ENCODE measurements at regions of chr17 and their contacts with region 1.

Region 1: DNA sequence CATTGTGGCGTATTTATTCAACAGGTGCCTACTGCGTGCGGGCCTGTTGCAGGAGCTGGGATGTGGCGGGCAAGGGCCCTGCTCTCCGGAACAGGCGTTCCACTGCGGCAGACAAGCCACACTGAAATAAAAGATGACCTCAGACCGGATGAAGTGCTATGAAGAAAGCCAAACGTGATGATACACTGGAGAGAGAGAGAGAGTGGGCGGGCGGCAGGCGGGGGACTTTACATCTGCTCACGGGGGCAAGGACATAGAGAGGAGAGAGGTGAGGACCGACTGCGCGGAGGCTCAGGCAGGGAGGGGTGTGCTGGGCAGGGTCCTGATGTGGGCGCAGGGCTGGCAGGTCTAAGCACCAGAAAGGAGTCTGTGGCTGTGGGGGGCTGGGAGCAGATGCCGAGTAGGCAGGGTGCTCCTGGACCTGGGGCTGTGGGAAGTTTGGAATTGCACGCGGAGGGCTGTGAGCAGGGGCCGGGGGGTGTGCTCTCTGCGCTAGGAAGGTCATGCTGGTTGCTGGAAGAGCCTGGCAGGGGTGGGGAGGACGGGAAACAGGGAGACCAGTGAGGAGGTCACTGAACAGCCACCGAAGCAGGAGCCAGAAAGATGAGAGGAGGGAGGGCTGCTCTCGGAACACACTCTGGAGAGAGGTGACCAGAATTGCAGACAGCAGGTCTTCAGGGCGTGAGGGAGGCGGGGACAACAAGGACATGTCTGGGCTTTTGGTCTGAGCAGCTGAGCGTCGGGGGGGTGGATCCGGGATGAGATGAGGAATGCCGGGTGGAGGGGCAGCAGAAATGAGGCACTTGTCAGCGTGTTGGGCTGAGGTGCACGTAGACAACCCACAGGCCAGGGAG is 9.9 kb downstream of the MXRA7 start:
- DNase-seq: peak; percentile 86
- ATAC-seq: peak; percentile 74
- H3K4me3 ChIP-seq: peak overlapping the region; percentile 56 to 75 (median 62)
- H3K27ac ChIP-seq: peak overlapping the region; percentile 71
- H3K4me1 ChIP-seq: peaks cover 74% of the 10 kb centered on the region
- H3K27me3 ChIP-seq: no peaks in the 10 kb centered on the region
- CTCF ChIP-seq: peak; percentile 27; the same call in 1 of the 2 replicates
- EP300 ChIP-seq: no peak
- POLR2A ChIP-seq: 0 out of 4 replicates have a peak, but pooled peaks of 1 of the 2 experiments have one; percentile 34
- RAD21 ChIP-seq: no peak

Region 2: GRCh38 chr17:76537578-76538280 is 163.1 kb before region 1 on chr17 and contains the start of gene CYGB:
- CTCF ChIA-PET with region 1: no interaction called
- POLR2A ChIA-PET with region 1: no interaction called
- in situ Hi-C with region 1: no loop called
- intact Hi-C with region 1: no loop called
- DNase-seq: no peak
- ATAC-seq: no peak
- H3K4me3 ChIP-seq: no peak within 1 kb of the TSS
- H3K27ac ChIP-seq: no peak within 1 kb of the TSS
- H3K4me1 ChIP-seq: peaks cover 39% of the 10 kb centered on the region
- H3K27me3 ChIP-seq: no peaks in the 10 kb centered on the region
- CTCF ChIP-seq: no peak
- EP300 ChIP-seq: no peak
- POLR2A ChIP-seq: no peak
- RAD21 ChIP-seq: no peak
- total RNA-seq, gene CYGB: 27.1 and 28.9 TPM in 2 replicates

Region 3: DNA sequence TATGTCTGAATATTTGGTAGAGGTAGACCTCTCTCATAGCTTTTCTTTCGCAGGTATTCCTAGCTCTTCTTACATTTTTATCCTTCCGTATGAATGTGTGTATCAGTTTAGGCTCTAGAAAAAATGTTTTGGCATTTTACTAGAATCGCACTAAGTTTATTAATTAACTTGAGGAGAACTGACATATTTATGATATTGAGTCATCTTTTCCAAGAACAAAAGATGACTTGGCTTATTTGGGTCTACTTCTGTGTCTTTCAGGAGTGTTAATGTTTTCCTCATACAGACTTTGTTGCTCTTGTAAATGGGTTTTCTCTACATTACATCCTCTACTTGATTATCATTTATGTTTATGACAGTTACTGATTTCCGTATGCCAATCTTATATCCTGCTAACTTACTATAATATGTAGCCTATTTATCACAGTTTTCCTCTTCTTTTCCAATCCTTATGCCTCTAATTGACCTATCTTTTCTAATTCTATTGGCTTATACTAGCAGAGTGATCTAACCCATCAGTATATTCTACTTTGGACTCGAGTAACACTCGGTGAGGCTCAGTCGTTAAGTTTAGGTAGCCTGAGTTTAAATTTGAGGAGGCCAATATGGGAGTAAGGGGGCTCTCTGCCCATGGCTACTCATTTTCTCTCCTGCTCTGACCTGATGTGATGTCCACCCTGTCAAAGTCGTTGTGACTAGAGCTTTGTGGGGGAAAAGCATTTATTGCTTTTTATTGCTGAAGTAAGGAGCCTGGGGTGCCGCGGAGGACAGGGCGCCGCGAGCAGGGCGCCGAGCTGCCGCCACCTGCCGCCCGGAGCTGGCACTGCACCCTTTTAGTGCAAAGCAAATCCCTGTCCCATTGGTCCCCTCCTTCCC is 77.3 kb before region 1 on chr17:
- CTCF ChIA-PET with region 1: no interaction called
- POLR2A ChIA-PET with region 1: no interaction called
- in situ Hi-C with region 1: no loop called
- intact Hi-C with region 1: no loop called
- DNase-seq: peak; percentile 41
- ATAC-seq: peak; percentile 84
- H3K4me3 ChIP-seq: peak overlapping the region in 2 of 3 experiments; percentile 44; a peak in 4 of 6 replicates
- H3K27ac ChIP-seq: no peak overlapping the region
- H3K4me1 ChIP-seq: peaks cover 13% of the 10 kb centered on the region
- H3K27me3 ChIP-seq: peaks cover 0 to 2% of the 10 kb centered on the region in 2 experiments; a peak in 1 of 5 replicates
- CTCF ChIP-seq: peak; percentile 93
- EP300 ChIP-seq: no peak
- POLR2A ChIP-seq: no peak
- RAD21 ChIP-seq: peak; percentile 95

Region 4: DNA sequence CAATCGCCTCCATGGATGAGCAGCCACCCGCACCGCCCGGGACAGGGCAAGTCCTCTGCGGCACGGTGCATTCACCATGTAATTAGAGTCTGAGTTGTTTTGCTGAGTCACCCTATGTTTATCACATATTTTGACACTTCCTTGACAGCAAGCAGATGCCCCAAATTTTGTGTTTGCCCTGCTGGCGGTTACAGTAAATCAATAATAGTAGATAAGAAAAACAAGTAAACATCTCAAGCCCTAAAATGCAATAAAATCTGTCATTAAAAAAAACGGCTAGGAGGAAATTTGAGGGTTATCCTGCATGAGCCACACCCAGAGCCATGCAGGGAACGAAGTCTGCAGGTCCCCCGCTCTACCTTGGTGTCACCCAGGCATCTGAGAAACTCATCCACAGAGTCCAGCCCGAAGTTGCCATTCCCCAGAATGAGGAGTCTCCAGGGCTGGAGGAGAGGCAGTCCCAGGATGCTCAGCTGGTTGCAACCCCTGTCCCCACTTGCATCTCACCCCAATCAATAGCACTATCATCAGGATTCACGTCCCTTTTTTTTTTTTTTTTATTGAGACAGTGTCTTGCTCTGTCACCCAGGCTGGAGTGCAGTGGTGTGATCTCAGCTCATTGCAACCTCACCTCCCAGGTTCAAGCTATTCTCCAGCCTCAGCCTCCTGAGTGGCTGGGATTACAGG is 40.8 kb before region 1 on chr17:
- CTCF ChIA-PET with region 1: no interaction called
- POLR2A ChIA-PET with region 1: no interaction called
- in situ Hi-C with region 1: no loop called
- intact Hi-C with region 1: no loop called
- DNase-seq: no peak
- ATAC-seq: peak; percentile 76
- H3K4me3 ChIP-seq: peak overlapping the region in 2 of 3 experiments; percentile 5 to 16; a peak in 2 of 6 replicates
- H3K27ac ChIP-seq: no peak overlapping the region
- H3K4me1 ChIP-seq: peaks cover 61% of the 10 kb centered on the region
- H3K27me3 ChIP-seq: no peaks in the 10 kb centered on the region
- CTCF ChIP-seq: no peak
- EP300 ChIP-seq: no peak
- POLR2A ChIP-seq: no peak
- RAD21 ChIP-seq: no peak

Region 5: GRCh38 chr17:76687308-76688164 is 13.3 kb before region 1 on chr17:
- CTCF ChIA-PET with region 1: no interaction called
- POLR2A ChIA-PET with region 1: interaction called, 10 read pairs
- in situ Hi-C with region 1: no loop called
- intact Hi-C with region 1: no loop called
- DNase-seq: no peak
- ATAC-seq: no peak
- H3K4me3 ChIP-seq: no peak overlapping the region
- H3K27ac ChIP-seq: no peak overlapping the region
- H3K4me1 ChIP-seq: peaks cover 62% of the 10 kb centered on the region
- H3K27me3 ChIP-seq: no peaks in the 10 kb centered on the region
- CTCF ChIP-seq: no peak
- EP300 ChIP-seq: no peak
- POLR2A ChIP-seq: no peak
- RAD21 ChIP-seq: no peak

Region 6: DNA sequence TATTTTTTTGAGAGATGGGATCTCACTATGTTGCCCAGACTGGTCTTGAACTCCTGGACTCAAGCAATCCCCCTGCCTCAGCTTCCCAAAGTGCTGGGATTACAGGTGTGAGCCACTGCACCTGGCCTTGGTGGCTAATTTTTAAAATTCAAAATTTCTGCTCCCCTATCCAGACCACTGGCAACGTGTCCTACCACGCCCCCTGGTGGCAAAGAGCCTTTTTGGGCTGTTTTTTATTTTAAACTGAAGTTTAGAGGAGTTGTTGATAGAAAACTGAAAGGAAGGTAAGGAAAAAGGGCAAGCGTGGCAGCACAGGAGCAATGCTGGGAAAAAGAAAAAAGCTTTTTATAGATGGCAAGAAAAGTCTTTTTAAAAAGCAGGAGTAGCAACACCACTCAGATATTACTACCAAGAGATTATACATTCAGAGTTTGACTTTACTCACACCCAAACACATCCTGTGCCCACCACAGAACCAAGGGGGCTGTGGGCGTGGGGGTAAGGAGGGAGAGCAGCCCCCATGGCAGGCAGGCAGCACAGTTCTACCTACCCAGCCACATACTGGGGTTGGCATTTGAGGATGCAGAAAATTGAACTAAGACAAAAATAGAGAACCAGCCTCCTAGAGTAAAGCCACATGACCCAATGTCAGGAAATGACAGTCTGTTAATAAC is 14.1 kb after region 1 on chr17:
- CTCF ChIA-PET with region 1: no interaction called
- POLR2A ChIA-PET with region 1: interaction called, 20 read pairs
- in situ Hi-C with region 1: no loop called
- intact Hi-C with region 1: no loop called
- DNase-seq: no peak
- ATAC-seq: peak; percentile 14; the same call in 2 of the 3 replicates
- H3K4me3 ChIP-seq: no peak overlapping the region
- H3K27ac ChIP-seq: no peak overlapping the region
- H3K4me1 ChIP-seq: peaks cover 22% of the 10 kb centered on the region
- H3K27me3 ChIP-seq: no peaks in the 10 kb centered on the region
- CTCF ChIP-seq: peak; percentile 84
- EP300 ChIP-seq: no peak
- POLR2A ChIP-seq: no peak
- RAD21 ChIP-seq: peak; percentile 59; the same call in 1 of the 2 replicates

Region 7: GRCh38 chr17:76737082-76737675 is 36.3 kb after region 1 on chr17 and contains the start of gene SRSF2:
- CTCF ChIA-PET with region 1: no interaction called
- POLR2A ChIA-PET with region 1: interaction called, 11 read pairs
- in situ Hi-C with region 1: no loop called
- intact Hi-C with region 1: no loop called
- DNase-seq: peak; percentile 98
- ATAC-seq: peak; percentile 74
- H3K4me3 ChIP-seq: peak within 1 kb of the TSS; percentile 93 to 100 (median 100)
- H3K27ac ChIP-seq: peak within 1 kb of the TSS; percentile 97
- H3K4me1 ChIP-seq: peaks cover 51% of the 10 kb centered on the region
- H3K27me3 ChIP-seq: peaks cover 0 to 3% of the 10 kb centered on the region in 2 experiments; a peak in 1 of 5 replicates
- CTCF ChIP-seq: peak; percentile 18
- EP300 ChIP-seq: peak; percentile 57 to 71; a peak in 3 of 4 replicates
- POLR2A ChIP-seq: peak; percentile 100
- RAD21 ChIP-seq: peak; percentile 63
- total RNA-seq, gene SRSF2: 249 and 319 TPM in 2 replicates

Region 8: GRCh38 chr17:76772842-76773525 is 72.1 kb after region 1 on chr17:
- CTCF ChIA-PET with region 1: no interaction called
- POLR2A ChIA-PET with region 1: no interaction called
- in situ Hi-C with region 1: no loop called
- intact Hi-C with region 1: no loop called
- DNase-seq: peak; percentile 59
- ATAC-seq: no peak; the same call in 2 of the 3 replicates
- H3K4me3 ChIP-seq: no peak overlapping the region
- H3K27ac ChIP-seq: no peak overlapping the region
- H3K4me1 ChIP-seq: 0 out of 2 replicates have a peak, but pooled peaks cover 6% of the 10 kb centered on the region
- H3K27me3 ChIP-seq: no peaks in the 10 kb centered on the region
- CTCF ChIP-seq: no peak
- EP300 ChIP-seq: no peak
- POLR2A ChIP-seq: no peak
- RAD21 ChIP-seq: no peak

Measured in HepG2 (cell line).